PC-9 (cell line): ENCODE measurements at regions of chr16 and their contacts with region 1.

Region 1: DNA sequence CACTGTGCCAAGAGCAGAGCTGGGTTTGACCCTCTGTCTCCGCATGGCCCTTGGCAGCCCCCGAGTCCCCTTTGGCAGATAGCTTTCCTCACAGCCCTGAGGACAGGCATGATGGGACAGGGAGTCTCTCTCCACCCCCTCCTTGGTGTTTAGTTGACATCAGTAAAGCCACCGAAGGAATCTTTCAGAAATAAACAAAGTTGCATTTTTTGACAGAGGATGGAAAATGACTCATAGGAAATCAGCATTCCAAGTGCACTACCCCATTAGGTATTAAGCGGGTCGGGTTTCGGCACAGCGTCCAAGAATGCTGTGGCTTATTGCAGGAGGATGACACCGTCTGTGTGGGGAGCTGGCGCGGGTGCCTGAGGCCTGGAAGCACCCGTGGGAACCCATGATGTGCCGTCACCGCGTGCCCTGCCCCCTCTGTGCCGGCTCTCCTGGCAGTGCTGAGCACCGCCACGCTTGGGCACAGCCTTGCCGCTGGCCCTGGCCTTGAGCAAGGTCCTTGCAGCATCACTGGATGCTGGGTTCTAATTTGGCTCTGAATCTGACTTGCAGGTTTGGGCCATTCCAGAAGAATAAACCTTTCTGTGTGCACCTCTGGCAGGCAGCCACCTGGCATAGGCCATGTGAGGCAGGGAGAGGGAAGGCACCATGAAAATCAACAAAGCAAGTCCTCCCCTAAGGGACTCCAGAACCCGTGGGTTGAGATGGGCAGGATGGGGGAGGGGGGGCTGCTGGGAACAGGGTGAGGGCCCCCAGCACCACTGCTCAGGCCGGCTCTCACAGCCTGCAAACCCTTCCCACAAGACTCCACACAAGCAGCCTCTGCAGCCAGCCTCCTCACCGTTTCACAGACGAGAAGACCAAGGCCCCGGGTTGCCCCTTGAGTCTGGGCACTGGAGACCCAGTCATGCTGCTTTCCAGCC is 50.5 kb upstream of the ZNF469 start:
- DNase-seq: peak; percentile 97 to 98
- H3K4me3 ChIP-seq: peak overlapping the region; percentile 35; the same call in 1 of the 2 replicates
- H3K27ac ChIP-seq: peak overlapping the region; percentile 99
- H3K4me1 ChIP-seq: peaks cover 32% of the 10 kb centered on the region
- H3K27me3 ChIP-seq: no peaks in the 10 kb centered on the region
- CTCF ChIP-seq: no peak

Region 2: GRCh38 chr16:87950765-87951549 is 381.3 kb before region 1 on chr16 and contains the start of gene BANP:
- CTCF ChIA-PET with region 1: no interaction called
- POLR2A ChIA-PET with region 1: no interaction called
- intact Hi-C with region 1: loop called (anchors 5 kb)
- DNase-seq: peak; percentile 98 to 99
- H3K4me3 ChIP-seq: peak within 1 kb of the TSS; percentile 96
- H3K27ac ChIP-seq: peak within 1 kb of the TSS; percentile 77
- H3K4me1 ChIP-seq: peaks cover 30% of the 10 kb centered on the region
- H3K27me3 ChIP-seq: no peaks in the 10 kb centered on the region
- CTCF ChIP-seq: peak; percentile 69
- total RNA-seq, gene BANP: 60.9 and 73.2 TPM in 2 replicates

Region 3: DNA sequence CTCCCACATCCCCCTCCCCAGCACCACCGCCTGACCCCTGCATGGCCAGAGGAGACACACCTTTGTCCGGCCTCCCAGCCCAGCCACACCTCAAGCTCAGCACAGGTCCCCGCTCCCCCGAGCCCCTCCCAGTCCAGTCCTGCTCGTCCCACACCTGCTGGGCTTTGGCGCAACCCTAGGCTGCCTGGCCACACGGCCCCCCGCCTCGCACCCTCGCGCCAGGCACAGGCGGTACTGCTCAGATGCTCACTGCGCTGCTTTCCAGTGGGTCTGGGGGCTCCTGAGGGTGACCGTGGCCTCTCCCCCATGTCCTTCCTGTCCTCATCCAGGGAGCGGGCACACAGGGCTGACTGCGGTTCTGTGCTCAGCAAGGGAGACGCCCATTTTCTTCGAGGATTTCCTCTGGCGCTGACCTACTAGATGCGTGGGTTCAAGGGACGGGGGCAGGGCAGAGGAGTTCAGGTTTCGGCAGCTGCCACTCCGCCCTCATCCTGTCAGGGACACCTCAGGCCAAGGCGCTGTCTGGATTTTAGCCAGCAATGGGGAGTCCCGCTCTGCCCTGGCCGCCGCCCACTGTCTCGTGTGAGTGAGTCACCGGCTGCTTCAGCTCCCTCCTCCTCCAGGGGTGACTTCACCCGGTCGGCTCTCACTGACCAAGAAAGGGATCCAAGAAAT is 67.5 kb before region 1 on chr16:
- CTCF ChIA-PET with region 1: no interaction called
- POLR2A ChIA-PET with region 1: no interaction called
- intact Hi-C with region 1: loop called (anchors 1 kb)
- DNase-seq: peak; percentile 93 to 99
- H3K4me3 ChIP-seq: peak overlapping the region; percentile 45; the same call in 1 of the 2 replicates
- H3K27ac ChIP-seq: peak overlapping the region; percentile 58
- H3K4me1 ChIP-seq: peaks cover 16% of the 10 kb centered on the region; the same call in 1 of the 2 replicates
- H3K27me3 ChIP-seq: no peaks in the 10 kb centered on the region
- CTCF ChIP-seq: no peak

Region 4: DNA sequence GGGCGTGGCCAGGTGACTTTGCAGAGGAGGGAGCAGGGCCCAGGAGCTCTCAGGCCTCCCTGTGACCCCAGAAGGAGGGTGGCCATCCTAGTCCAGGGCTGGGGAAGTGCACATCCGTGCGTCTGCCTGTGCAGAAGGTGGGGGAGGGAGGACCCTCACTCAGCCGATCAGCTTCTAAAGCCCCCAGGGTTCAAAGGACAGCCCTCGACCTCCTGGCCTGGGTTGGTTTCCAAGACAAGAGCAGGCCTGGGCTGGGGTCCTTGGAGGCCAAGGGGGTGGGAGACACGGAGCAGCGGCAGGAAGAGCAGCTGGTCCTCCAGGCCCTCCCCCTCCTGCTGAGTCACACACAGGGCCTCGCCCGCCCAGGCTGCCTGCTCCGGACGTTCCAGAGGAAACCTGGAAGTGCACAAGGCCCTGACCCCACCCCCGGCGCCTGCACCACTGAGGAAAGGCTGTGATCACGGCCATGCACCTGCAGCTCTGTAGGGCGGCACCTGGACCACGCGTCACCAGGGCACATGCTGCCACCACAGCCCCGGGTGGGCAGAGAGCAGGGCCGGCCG is 16.6 kb before region 1 on chr16:
- CTCF ChIA-PET with region 1: no interaction called
- POLR2A ChIA-PET with region 1: no interaction called
- intact Hi-C with region 1: loop called (anchors 1 kb)
- DNase-seq: peak; percentile 77 to 90
- H3K4me3 ChIP-seq: peak overlapping the region; percentile 38; the same call in 1 of the 2 replicates
- H3K27ac ChIP-seq: peak overlapping the region; percentile 49
- H3K4me1 ChIP-seq: peaks cover 15% of the 10 kb centered on the region
- H3K27me3 ChIP-seq: no peaks in the 10 kb centered on the region
- CTCF ChIP-seq: no peak

Region 5: GRCh38 chr16:88376835-88377726 is 44.8 kb after region 1 on chr16:
- CTCF ChIA-PET with region 1: no interaction called
- POLR2A ChIA-PET with region 1: no interaction called
- intact Hi-C with region 1: no loop called
- DNase-seq: peak in 1 of 2 experiments; percentile 44
- H3K4me3 ChIP-seq: no peak overlapping the region
- H3K27ac ChIP-seq: no peak overlapping the region
- H3K4me1 ChIP-seq: no peaks in the 10 kb centered on the region
- H3K27me3 ChIP-seq: no peaks in the 10 kb centered on the region
- CTCF ChIP-seq: no peak

Region 6: GRCh38 chr16:89623511-89624261 is 1291.4 kb after region 1 on chr16:
- CTCF ChIA-PET with region 1: interaction called, 10 read pairs
- POLR2A ChIA-PET with region 1: no interaction called
- intact Hi-C with region 1: no loop called
- DNase-seq: no peak
- H3K4me3 ChIP-seq: no peak overlapping the region
- H3K27ac ChIP-seq: no peak overlapping the region
- H3K4me1 ChIP-seq: no peaks in the 10 kb centered on the region
- H3K27me3 ChIP-seq: peaks cover 40% of the 10 kb centered on the region
- CTCF ChIP-seq: no peak